ENCODE measurements at regions of chr16 and their contacts with region 1.

Region 1: GRCh38 chr16:56191156-56191815 is at the start of gene GNAO1:
- DNase-seq: peak; percentile 56
- ATAC-seq: peak; percentile 79
- H3K4me3 Mint-ChIP-seq: peak within 1 kb of the TSS; percentile 69
- H3K27ac Mint-ChIP-seq: no peak within 1 kb of the TSS
- H3K4me1 Mint-ChIP-seq: peaks cover 30% of the 10 kb centered on the region
- H3K27me3 Mint-ChIP-seq: peaks cover 69% of the 10 kb centered on the region
- CTCF ChIP-seq: no peak
- total RNA-seq, gene GNAO1: 2.3 to 2.4 TPM

Region 2: GRCh38 chr16:55756963-55757362 is 434.3 kb before region 1 on chr16:
- CTCF ChIA-PET with region 1: no interaction called
- POLR2A ChIA-PET with region 1: no interaction called
- intact Hi-C with region 1: loop called (anchors 10 kb)
- DNase-seq: no peak
- ATAC-seq: no peak
- H3K4me3 Mint-ChIP-seq: no peak overlapping the region
- H3K27ac Mint-ChIP-seq: no peak overlapping the region
- H3K4me1 Mint-ChIP-seq: peaks cover 25% of the 10 kb centered on the region
- H3K27me3 Mint-ChIP-seq: peaks cover 4% of the 10 kb centered on the region
- CTCF ChIP-seq: no peak

Region 3: GRCh38 chr16:56041686-56042085 is 149.6 kb before region 1 on chr16:
- CTCF ChIA-PET with region 1: no interaction called
- POLR2A ChIA-PET with region 1: no interaction called
- intact Hi-C with region 1: loop called (anchors 10 kb)
- DNase-seq: peak; percentile 42
- ATAC-seq: peak; percentile 90
- H3K4me3 Mint-ChIP-seq: no peak overlapping the region
- H3K27ac Mint-ChIP-seq: no peak overlapping the region
- H3K4me1 Mint-ChIP-seq: no peaks in the 10 kb centered on the region
- H3K27me3 Mint-ChIP-seq: peaks cover 22% of the 10 kb centered on the region
- CTCF ChIP-seq: peak; percentile 33

Region 4: DNA sequence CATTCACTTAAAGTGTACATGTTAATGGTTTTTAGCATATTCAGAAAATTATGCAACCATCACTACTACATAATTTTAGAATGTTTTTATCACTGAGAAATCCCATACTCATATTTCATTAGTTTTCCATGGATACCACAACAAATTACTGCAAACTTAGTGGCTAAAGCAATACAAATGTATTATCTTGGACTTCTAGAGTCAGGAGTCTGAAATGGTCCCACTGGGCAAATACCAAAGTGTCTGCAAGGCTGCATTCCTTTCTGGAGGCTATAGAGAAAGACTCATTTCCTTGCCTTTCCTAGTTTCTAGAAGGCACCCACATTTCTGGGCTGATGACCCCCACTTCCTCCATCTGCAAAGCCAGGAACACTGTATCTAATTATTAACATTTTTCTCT is 16.9 kb before region 1 on chr16:
- CTCF ChIA-PET with region 1: no interaction called
- POLR2A ChIA-PET with region 1: no interaction called
- intact Hi-C with region 1: no loop called
- DNase-seq: no peak
- ATAC-seq: no peak
- H3K4me3 Mint-ChIP-seq: no peak overlapping the region
- H3K27ac Mint-ChIP-seq: no peak overlapping the region
- H3K4me1 Mint-ChIP-seq: no peaks in the 10 kb centered on the region
- H3K27me3 Mint-ChIP-seq: peaks cover 12% of the 10 kb centered on the region
- CTCF ChIP-seq: no peak

Measured in activated CD8-positive, alpha-beta T cell treated with anti-CD3 and anti-CD28 coated beads for 36 hours (primary cell).